Sigmoid colon (tissue), 7 donors: ENCODE measurements at regions of chr17 and their contacts with region 1.

Region 1: DNA sequence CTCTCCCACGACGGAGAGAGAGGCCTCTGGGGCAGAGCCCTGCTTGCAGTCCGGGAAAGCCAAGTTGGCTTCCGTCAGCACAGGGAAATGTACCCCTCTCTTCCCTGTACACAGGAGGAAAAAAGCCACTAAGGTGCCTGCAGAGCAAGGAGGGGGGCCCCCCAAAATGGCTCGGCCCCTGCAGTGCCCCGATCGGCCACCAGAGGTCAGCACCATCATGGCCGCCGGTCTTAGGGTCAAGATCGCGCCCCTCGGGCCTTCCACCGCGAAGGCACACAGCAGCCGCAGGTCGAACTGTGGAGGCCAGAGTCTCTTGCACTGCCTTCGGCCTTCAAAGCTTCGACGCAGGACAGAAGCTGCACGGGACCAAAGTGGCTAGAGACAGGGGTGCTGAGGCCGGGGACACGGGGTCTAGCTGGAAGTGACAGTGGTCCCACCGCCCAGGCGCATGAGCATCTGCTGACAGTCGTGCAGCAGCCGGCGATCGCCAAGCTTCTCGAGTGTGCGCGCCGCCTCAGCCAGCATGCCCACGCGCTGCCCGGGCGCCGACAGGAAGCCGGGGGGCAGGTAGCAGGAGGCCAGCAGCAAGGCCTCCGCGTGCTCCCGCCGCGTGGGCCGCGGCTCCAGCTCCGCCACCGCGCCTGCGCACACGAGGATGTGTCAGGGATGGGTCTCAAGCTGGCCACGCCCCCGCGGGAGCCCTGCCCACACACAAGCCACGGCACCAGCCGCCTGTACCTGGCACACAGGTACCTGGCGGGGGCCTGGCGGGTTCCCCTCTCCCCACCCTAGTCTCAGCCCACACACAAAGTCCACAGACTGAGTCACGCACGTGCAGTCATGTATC is 24.4 kb downstream of the SREBF1 start:
- DNase-seq: peak; percentile 89
- H3K4me3 ChIP-seq: no peak overlapping the region
- H3K27ac ChIP-seq: peak overlapping the region; percentile 31 to 90 (median 83)
- H3K4me1 ChIP-seq: peaks cover 0 to 66% (median 57%) of the 10 kb centered on the region in 4 donors
- H3K27me3 ChIP-seq: no peaks in the 10 kb centered on the region
- CTCF ChIP-seq: peak; percentile 99 to 100 (median 100)
- EP300 ChIP-seq: no peak
- POLR2A ChIP-seq: no peak

Region 2: GRCh38 chr17:17783116-17783824 is 29.2 kb before region 1 on chr17:
- intact Hi-C with region 1: no loop called
- DNase-seq: no peak
- H3K4me3 ChIP-seq: peak overlapping the region; percentile 21 to 56 (median 55)
- H3K27ac ChIP-seq: peak overlapping the region; percentile 87 to 93 (median 92)
- H3K4me1 ChIP-seq: peaks cover 2 to 81% (median 71%) of the 10 kb centered on the region in 4 donors
- H3K27me3 ChIP-seq: no peaks in the 10 kb centered on the region
- CTCF ChIP-seq: no peak
- EP300 ChIP-seq: no peak
- POLR2A ChIP-seq: no peak

Region 3: GRCh38 chr17:17859909-17860765 is 47.7 kb after region 1 on chr17:
- intact Hi-C with region 1: loop called (anchors 1 kb)
- DNase-seq: peak; percentile 82
- H3K4me3 ChIP-seq: no peak overlapping the region
- H3K27ac ChIP-seq: peak overlapping the region in 2 of 4 donors; percentile 3 to 7
- H3K4me1 ChIP-seq: peaks cover 0 to 20% (median 8%) of the 10 kb centered on the region in 4 donors
- H3K27me3 ChIP-seq: no peaks in the 10 kb centered on the region
- CTCF ChIP-seq: peak; percentile 91 to 98 (median 96)
- EP300 ChIP-seq: no peak
- POLR2A ChIP-seq: no peak